Posterior vena cava (tissue), 2 donors: ENCODE measurements at regions of chr9 and their contacts with region 1.

Region 1: DNA sequence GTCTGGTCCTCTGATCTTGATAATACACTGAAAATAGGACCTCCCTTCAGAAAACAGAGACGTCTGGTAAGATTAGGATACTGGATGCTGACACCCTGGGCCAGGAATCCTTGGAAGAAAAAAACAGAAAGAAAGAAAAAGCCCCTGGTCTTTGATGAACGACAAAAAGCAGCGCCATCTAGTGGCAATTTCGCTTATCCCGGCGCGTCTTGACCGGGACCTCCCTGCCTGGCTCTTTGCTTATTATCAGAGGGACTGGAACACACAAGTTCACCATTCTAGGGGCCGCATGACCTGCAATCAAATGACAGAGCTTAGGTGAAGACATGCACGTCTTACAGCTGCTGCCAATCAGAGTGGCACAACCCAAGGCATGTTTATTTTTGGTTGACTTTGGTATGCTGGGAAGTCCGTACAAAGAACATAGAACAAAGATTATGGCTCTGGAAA is 114.9 kb upstream of the NFIB start:
- DNase-seq: peak; percentile 89

Region 2: GRCh38 chr9:13033959-13034693 is 1394.7 kb before region 1 on chr9:
- intact Hi-C with region 1: loop called in 1 of 2 experiments (anchors 10 kb)
- DNase-seq: peak; percentile 86

Region 3: GRCh38 chr9:14056316-14056861 is 372.4 kb before region 1 on chr9:
- intact Hi-C with region 1: no loop called
- DNase-seq: no peak